Prostate gland (tissue), 2 donors: ENCODE measurements at regions of chr10 and their contacts with region 1.

Region 1: GRCh38 chr10:119006451-119007210 is 22.9 kb upstream of the NANOS1 start:
- DNase-seq: peak; percentile 89
- H3K4me3 ChIP-seq: no peak overlapping the region
- H3K27ac ChIP-seq: peak overlapping the region; percentile 27 to 33
- H3K4me1 ChIP-seq: no peaks in the 10 kb centered on the region
- H3K27me3 ChIP-seq: no peaks in the 10 kb centered on the region
- CTCF ChIP-seq: peak in 1 of 4 experiments; percentile 4
- POLR2A ChIP-seq: no peak

Region 2: DNA sequence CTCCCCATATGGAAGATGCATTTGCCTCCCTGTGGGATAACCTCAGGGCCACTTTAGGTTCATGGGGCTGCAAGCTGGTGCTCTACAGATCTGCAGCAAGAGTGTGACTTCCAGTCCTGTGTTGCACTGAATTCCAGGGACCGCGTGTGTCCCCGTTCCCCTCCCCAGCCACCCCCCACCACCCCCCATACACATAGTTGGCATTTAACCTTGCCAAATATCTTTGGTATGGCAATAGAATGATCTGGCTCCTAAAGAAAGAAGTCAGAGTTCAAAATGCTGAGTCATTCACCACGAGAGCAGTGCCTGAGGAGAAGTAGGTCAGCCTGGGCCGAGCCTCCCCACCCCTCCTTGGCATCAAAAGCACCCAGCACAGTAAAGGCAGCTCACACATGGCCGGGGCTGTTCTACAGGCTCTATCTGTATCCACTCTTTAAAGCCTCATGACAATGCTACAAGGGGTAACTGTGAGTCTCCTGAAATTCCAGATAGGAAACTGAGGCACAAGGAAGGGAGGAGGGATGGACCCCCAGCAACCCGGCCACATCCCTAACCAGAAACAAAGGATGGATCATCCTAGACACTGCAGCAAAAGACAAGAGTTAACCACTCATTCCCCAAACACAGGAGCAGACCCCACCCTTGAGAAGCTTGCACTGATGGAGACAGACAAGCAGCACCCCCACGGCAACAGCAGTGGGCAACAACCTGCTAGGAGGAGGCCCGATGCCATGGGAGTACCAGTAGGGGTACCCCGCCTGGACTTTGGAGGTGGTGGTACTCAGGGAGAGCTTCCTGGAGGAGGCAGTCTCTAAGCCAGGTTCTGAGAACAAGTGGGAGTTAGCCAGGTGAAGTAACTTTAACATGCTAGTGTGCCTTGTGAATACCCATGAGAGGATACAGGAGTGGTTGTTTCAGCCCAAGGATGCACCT is 47.4 kb before region 1 on chr10:
- intact Hi-C with region 1: loop called (anchors 5 kb)
- DNase-seq: peak; percentile 32
- H3K4me3 ChIP-seq: no peak overlapping the region
- H3K27ac ChIP-seq: no peak overlapping the region
- H3K4me1 ChIP-seq: no peaks in the 10 kb centered on the region
- H3K27me3 ChIP-seq: no peaks in the 10 kb centered on the region
- CTCF ChIP-seq: no peak
- POLR2A ChIP-seq: no peak

Region 3: GRCh38 chr10:119496273-119496672 is 489.6 kb after region 1 on chr10:
- intact Hi-C with region 1: no loop called
- DNase-seq: no peak
- H3K4me3 ChIP-seq: no peak overlapping the region
- H3K27ac ChIP-seq: no peak overlapping the region
- H3K4me1 ChIP-seq: peaks cover 4% of the 10 kb centered on the region
- H3K27me3 ChIP-seq: no peaks in the 10 kb centered on the region
- CTCF ChIP-seq: no peak
- POLR2A ChIP-seq: no peak